Activated CD4-positive, alpha-beta T cell treated with anti-CD3 and anti-CD28 coated beads, Interleukin-2, amount 10 ng/mL, durations not matched to agents 24 days and 14 days (primary cell): ENCODE measurements at regions of chr18 and their contacts with region 1.

Region 1: GRCh38 chr18:23586249-23587196 is at the start of gene NPC1:
- DNase-seq: peak; percentile 98
- H3K4me3 Mint-ChIP-seq: peak within 1 kb of the TSS; percentile 94
- H3K27ac Mint-ChIP-seq: peak within 1 kb of the TSS; percentile 96
- H3K4me1 Mint-ChIP-seq: peaks cover 37% of the 10 kb centered on the region
- H3K27me3 Mint-ChIP-seq: peaks cover 3% of the 10 kb centered on the region
- total RNA-seq, gene NPC1: 26.3 and 29.9 TPM in 2 replicates

Region 2: GRCh38 chr18:23437357-23438045 is 149.0 kb before region 1 on chr18:
- intact Hi-C with region 1: loop called (anchors 2 kb)
- DNase-seq: peak; percentile 94
- H3K4me3 Mint-ChIP-seq: peak overlapping the region; percentile 89
- H3K27ac Mint-ChIP-seq: peak overlapping the region; percentile 89
- H3K4me1 Mint-ChIP-seq: peaks cover 14% of the 10 kb centered on the region
- H3K27me3 Mint-ChIP-seq: peaks cover 2% of the 10 kb centered on the region

Region 3: GRCh38 chr18:23452728-23453679 is 133.5 kb before region 1 on chr18 and contains the start of gene RIOK3:
- intact Hi-C with region 1: loop called (anchors 1 kb)
- DNase-seq: peak; percentile 99
- H3K4me3 Mint-ChIP-seq: peak within 1 kb of the TSS; percentile 100
- H3K27ac Mint-ChIP-seq: peak within 1 kb of the TSS; percentile 95
- H3K4me1 Mint-ChIP-seq: peaks cover 38% of the 10 kb centered on the region
- H3K27me3 Mint-ChIP-seq: peaks cover 6% of the 10 kb centered on the region
- total RNA-seq, gene RIOK3: 46.7 and 53.3 TPM in 2 replicates

Region 4: DNA sequence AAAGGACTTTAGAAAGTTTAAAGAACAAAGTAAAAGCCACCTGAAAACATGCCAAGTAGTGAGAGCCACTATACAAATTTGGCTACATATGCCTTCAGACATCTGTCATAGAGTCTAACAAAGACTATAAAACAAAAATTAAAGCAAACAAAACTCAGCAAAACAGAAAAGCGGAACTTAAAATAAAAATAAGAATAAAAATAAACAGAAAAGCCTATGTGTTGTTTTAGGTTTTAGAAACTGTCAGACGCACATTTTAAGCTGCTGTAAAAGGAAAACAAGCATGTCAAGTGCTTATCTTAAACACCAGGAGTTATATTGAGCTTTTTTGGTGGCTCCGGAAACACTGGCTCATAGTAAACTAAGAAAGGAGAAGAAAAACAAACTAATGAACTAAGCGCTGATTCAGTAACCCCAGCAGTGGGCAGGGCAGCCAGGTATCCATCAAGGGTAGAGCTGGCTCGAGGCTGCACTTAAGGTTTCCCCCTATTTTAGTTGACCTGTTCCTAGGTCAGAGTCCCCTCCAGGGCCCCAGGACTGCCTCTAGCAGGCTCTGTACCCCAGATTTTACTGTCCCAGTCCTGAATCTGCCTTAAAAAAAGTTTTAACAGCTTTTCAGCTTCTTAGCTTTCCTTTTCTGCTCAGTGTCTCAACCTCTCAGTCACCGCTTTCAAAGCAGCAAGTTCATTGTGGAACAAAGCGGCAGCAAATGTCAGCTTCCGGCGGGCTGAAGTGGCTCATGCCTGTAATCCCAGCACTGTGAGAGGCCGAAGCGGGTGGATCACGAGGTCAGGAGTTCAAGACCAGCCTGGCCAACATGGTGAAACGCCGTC is 98.6 kb before region 1 on chr18:
- intact Hi-C with region 1: no loop called
- DNase-seq: peak; percentile 85
- H3K4me3 Mint-ChIP-seq: peak overlapping the region; percentile 57
- H3K27ac Mint-ChIP-seq: peak overlapping the region; percentile 81
- H3K4me1 Mint-ChIP-seq: peaks cover 17% of the 10 kb centered on the region
- H3K27me3 Mint-ChIP-seq: no peaks in the 10 kb centered on the region

Region 5: GRCh38 chr18:23515911-23516546 is 70.5 kb before region 1 on chr18:
- intact Hi-C with region 1: loop called (anchors 1 kb)
- DNase-seq: peak; percentile 93
- H3K4me3 Mint-ChIP-seq: no peak overlapping the region
- H3K27ac Mint-ChIP-seq: peak overlapping the region; percentile 57
- H3K4me1 Mint-ChIP-seq: peaks cover 26% of the 10 kb centered on the region
- H3K27me3 Mint-ChIP-seq: no peaks in the 10 kb centered on the region

Region 6: GRCh38 chr18:23540867-23541266 is 45.7 kb before region 1 on chr18:
- intact Hi-C with region 1: loop called (anchors 1 kb)
- DNase-seq: peak; percentile 83
- H3K4me3 Mint-ChIP-seq: peak overlapping the region; percentile 84
- H3K27ac Mint-ChIP-seq: peak overlapping the region; percentile 83
- H3K4me1 Mint-ChIP-seq: peaks cover 35% of the 10 kb centered on the region
- H3K27me3 Mint-ChIP-seq: no peaks in the 10 kb centered on the region

Region 7: DNA sequence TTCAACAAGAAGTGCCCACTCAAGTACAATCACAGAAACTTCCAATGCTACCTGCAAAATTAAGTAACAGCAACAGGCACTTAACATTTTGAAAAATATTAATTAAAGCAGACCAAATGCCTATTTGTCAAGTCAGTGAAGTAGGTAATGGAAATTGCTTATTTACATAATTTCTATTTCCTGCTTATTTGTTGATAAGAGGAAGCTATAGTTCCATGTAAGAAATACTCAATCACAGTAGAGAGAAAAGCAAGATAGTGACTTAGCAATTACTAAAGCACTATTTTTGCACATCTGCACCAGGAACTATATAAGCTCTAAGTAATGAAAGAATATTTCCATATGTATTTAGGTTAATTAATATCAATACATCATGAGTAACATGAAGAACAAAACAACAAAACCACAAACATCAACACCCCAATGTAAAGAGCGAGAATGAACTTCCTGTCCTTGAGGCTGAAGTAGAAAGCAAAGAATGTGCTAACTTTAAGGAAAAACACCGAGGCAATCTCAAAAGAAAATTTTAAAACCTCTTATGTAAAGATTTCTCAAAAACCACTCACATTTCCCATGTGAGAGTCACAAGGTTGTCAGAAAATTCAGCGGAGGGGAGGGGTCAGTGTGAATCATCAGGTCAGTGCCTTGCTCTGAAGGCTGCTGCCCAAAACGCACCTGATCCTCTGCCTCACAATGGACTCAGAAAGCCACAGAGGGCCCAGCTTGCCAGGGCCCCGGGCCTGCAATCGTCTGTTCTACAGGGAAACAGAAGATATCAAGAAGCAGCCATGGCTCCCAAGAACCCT is 12.7 kb before region 1 on chr18:
- intact Hi-C with region 1: loop called (anchors 1 kb)
- DNase-seq: peak; percentile 77
- H3K4me3 Mint-ChIP-seq: peak overlapping the region; percentile 74
- H3K27ac Mint-ChIP-seq: peak overlapping the region; percentile 91
- H3K4me1 Mint-ChIP-seq: peaks cover 36% of the 10 kb centered on the region
- H3K27me3 Mint-ChIP-seq: no peaks in the 10 kb centered on the region